Common myeloid progenitor, CD34-positive (primary cell): ENCODE measurements at regions of chr11 and their contacts with region 1.

Region 1: DNA sequence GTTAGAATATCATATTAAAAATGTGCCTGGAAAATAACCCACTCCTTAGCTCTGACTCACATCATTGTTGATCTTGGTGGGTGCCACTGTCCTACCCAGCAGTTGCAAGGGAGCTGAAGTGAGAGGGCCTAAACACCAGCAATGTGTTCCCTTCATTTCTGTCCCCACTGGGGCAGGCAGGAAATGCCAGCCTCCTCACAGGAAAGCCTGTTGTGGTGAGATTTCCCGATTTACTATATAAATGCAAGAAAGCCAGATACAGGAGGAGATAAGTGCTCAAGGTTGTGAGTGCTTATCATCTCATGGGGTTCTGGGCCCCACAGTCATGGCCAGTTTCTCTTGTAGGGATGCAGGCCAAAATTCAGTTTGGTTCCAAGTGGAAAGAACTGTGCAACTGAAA is 15.8 kb upstream of the FLI1 start:
- DNase-seq: peak; percentile 95 to 99 (median 98)
- H3K4me3 ChIP-seq: peak overlapping the region in 1 of 7 experiments; percentile 26
- H3K27ac ChIP-seq: peak overlapping the region; percentile 29 to 60
- H3K4me1 ChIP-seq: peaks cover 25 to 67% (median 48%) of the 10 kb centered on the region in 4 experiments
- H3K27me3 ChIP-seq: no peaks in the 10 kb centered on the region

Region 2: DNA sequence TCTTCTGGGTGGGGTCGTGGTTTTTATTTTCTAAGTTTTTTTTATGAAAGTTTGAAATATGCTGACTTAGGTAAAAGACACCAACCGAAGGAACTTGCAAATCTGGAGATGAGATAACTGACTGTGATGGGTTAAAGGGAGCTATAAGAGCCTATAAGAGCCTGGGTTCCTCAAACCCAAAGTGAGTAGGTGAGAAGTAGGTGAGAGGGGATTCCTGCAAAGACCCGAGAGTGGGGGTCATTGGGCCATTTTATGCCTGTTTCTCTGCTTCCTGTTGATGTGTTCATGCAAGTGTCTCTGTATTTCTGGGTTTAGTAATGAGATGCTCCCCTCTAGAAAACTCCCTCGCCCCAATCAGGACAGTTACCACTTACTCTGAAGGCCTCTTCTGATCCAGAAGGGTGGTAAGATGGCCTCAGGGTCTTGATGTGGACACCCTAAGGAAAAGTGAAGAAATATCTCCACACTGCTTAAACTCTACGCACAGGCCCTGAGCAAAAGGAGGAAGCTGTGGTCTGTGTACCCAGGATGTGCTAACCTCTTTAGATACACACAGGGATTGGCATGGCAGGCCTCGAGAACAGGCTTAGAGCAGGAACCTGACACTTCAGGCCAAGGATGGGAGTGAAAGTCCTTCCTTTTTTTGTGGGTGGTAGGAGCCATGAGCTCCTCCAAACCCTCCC is 17.7 kb after region 1 on chr11:
- CTCF ChIA-PET with region 1: interaction called, 15 read pairs
- POLR2A ChIA-PET with region 1: interaction called, 8 read pairs
- DNase-seq: peak; percentile 86 to 95 (median 92)
- H3K4me3 ChIP-seq: peak overlapping the region; percentile 86 to 96 (median 91)
- H3K27ac ChIP-seq: peak overlapping the region; percentile 70 to 83
- H3K4me1 ChIP-seq: peaks cover 28 to 82% (median 76%) of the 10 kb centered on the region in 4 experiments
- H3K27me3 ChIP-seq: no peaks in the 10 kb centered on the region

Region 3: DNA sequence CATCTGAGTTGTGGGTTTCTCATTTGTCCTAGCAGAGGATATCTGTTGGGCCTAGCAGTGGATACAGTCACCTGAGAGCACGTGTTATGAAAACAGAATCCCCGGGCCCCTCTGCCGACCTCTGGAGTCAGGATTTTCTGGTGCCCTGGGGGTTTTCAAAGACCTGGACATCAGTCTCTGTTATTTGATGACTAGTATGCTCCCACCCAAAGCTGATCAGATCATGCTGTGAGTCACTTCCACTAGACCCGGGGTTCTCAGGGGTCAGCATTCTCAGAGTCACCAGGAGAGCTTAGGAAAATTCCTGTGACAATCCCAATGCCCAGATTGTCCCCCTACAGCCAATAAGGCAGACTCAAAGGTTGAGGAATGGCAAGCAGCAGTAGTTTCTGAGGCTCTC is 150.3 kb after region 1 on chr11:
- CTCF ChIA-PET with region 1: no interaction called
- POLR2A ChIA-PET with region 1: no interaction called
- DNase-seq: no peak
- H3K4me3 ChIP-seq: no peak overlapping the region
- H3K27ac ChIP-seq: no peak overlapping the region
- H3K4me1 ChIP-seq: peaks cover 5 to 16% (median 12%) of the 10 kb centered on the region in 4 experiments
- H3K27me3 ChIP-seq: peaks cover 0 to 6% (median 0%) of the 10 kb centered on the region in 5 experiments

Region 4: GRCh38 chr11:129230006-129230405 is 552.0 kb after region 1 on chr11:
- CTCF ChIA-PET with region 1: no interaction called
- POLR2A ChIA-PET with region 1: no interaction called
- DNase-seq: peak; percentile 47 to 64 (median 60)
- H3K4me3 ChIP-seq: no peak overlapping the region
- H3K27ac ChIP-seq: no peak overlapping the region
- H3K4me1 ChIP-seq: no peaks in the 10 kb centered on the region
- H3K27me3 ChIP-seq: no peaks in the 10 kb centered on the region